GM12878 (cell line): ENCODE measurements at regions of chr6 and their contacts with region 1.

Region 1: DNA sequence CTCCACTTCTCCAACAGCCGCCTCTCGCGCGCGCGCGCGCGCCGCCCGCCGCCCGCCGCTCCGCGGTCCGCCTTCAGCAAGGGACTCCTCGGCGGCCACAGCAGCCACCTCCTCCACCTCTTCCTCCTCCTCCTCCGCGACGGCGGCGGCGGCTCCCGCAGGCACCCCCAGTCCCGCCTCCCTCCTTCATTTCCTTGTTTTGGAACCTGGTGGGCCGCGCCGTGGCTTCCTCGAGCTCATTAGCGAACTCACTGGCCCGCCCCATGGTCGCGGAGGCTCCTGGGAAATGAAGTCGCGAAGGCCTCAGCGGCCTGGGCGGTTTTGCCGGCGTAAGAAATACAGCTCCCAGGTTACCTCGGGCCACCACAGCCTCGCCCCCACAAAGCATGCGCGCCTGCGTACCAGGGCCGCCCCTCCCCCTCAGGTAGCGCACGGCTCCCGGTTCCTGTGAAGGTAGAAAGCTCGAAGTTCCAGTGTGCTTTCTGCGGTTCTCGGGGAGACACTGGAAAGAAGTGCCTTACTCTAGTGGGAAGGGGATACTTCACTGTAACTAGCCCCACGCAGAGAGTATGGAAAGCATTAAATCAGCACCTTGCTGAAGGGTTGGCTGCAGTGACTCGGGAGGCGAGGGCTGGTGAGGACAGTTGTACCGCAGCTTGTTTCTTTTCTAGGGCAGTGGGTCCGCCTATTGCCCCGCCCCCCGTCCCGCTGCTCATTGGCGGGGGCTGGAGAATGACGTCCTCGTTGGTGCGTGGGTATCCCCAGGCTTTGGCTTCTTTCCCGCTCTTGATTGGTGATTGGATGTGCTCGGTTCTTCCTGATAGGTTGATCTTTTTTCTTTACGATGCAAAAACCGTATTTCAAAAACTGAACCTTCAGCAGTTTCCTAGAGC is at the start of gene CDK19:
- DNase-seq: peak; percentile 96
- ATAC-seq: peak; percentile 89
- H3K4me3 ChIP-seq: peak within 1 kb of the TSS; percentile 77
- H3K27ac ChIP-seq: peak within 1 kb of the TSS; percentile 86
- H3K4me1 ChIP-seq: peaks cover 16% of the 10 kb centered on the region
- H3K27me3 ChIP-seq: no peaks in the 10 kb centered on the region
- CTCF ChIP-seq: no peak
- EP300 ChIP-seq: peak in 1 of 2 experiments; percentile 47; a peak in 2 of 4 replicates
- POLR2A ChIP-seq: peak; percentile 94
- RAD21 ChIP-seq: no peak
- polyA plus RNA-seq, gene CDK19: 4.6 to 10.1 TPM

Region 2: GRCh38 chr6:110784610-110784979 is 30.9 kb before region 1 on chr6:
- CTCF ChIA-PET with region 1: interaction called, 4 read pairs
- POLR2A ChIA-PET with region 1: interaction called, 7 read pairs
- RAD21 ChIA-PET with region 1: interaction called, 11 read pairs
- SMC1A ChIA-PET with region 1: interaction called, 6 read pairs
- in situ Hi-C with region 1: no loop called
- intact Hi-C with region 1: loop called (anchors 1 kb)
- DNase-seq: no peak
- ATAC-seq: peak; percentile 59
- H3K4me3 ChIP-seq: no peak overlapping the region
- H3K27ac ChIP-seq: no peak overlapping the region
- H3K4me1 ChIP-seq: peaks cover 36% of the 10 kb centered on the region
- H3K27me3 ChIP-seq: no peaks in the 10 kb centered on the region
- CTCF ChIP-seq: no peak
- EP300 ChIP-seq: no peak
- POLR2A ChIP-seq: no peak
- RAD21 ChIP-seq: no peak

Region 3: DNA sequence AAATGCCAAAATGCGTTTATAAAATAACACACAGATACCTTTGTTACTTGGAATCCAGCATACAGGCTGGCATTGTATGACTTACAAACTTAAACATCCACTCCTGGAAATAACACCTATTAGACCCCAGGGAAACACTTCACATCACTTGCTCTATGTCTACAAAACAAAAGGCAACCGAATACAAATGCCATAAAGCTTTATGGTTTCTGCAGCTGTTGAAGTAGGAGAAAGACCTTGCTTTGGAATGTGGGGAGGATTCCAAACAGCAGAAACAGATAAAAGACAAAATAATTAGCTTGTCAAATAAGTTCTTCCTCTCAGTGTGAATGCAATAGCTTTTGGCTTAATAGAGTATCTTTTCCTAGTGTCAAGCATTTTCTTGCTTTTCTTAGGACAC is 49.4 kb after region 1 on chr6:
- CTCF ChIA-PET with region 1: no interaction called
- POLR2A ChIA-PET with region 1: interaction called, 6 read pairs
- RAD21 ChIA-PET with region 1: interaction called, 13 read pairs
- SMC1A ChIA-PET with region 1: interaction called, 10 read pairs
- in situ Hi-C with region 1: no loop called
- intact Hi-C with region 1: no loop called
- DNase-seq: no peak
- ATAC-seq: no peak
- H3K4me3 ChIP-seq: no peak overlapping the region
- H3K27ac ChIP-seq: no peak overlapping the region
- H3K4me1 ChIP-seq: peaks cover 16% of the 10 kb centered on the region
- H3K27me3 ChIP-seq: no peaks in the 10 kb centered on the region
- CTCF ChIP-seq: no peak
- EP300 ChIP-seq: no peak
- POLR2A ChIP-seq: no peak
- RAD21 ChIP-seq: no peak

Region 4: DNA sequence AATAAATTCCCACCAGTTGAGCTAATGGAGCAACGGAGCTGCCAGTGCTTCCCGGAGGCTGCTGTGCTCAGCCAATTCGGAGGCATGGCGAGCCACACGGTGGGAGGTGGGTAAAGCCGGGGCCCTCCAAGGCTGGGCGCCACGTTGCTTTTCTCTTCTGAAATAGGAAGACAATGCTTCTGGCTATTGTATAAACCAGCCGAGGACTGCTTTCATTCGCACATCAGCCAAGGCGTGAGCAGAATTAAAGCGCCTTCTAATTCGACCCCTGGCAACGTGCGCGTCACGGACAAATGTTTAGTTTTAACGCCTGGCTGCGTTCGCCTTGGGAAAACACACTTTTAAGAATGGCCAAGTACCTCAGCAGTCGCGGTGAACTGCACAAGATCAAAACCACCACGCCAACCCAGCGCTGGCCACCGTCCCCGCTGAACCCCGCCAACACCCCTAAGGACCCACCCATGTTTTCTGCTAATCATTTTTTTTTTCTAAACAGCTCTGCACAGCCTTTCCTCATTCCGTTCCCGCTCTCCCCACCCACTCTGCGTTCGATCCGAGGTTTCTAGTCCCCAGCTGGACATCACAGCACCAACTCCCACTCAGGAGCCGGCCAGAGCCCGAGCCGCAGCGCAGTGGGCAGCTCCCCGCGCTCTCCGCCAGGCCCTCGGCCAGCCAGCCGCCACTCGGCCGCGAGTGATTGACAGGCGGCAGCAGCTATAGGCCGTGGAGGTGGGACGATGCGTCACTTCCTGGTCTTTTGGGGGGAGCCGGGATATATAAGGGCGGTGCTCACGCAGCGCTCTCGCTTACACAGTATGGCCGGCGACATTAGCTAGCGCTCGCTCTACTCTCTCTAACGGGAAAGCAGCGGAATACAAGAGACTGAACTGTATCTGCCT is 58.8 kb after region 1 on chr6 and contains the start of gene AMD1:
- CTCF ChIA-PET with region 1: interaction called, 50 read pairs
- POLR2A ChIA-PET with region 1: interaction called, 75 read pairs
- RAD21 ChIA-PET with region 1: interaction called, 107 read pairs
- SMC1A ChIA-PET with region 1: interaction called, 84 read pairs
- in situ Hi-C with region 1: no loop called
- intact Hi-C with region 1: loop called (anchors 1 kb)
- DNase-seq: peak; percentile 85
- ATAC-seq: peak; percentile 73
- H3K4me3 ChIP-seq: peak within 1 kb of the TSS; percentile 94
- H3K27ac ChIP-seq: peak within 1 kb of the TSS; percentile 93
- H3K4me1 ChIP-seq: peaks cover 16% of the 10 kb centered on the region
- H3K27me3 ChIP-seq: no peaks in the 10 kb centered on the region
- CTCF ChIP-seq: no peak
- EP300 ChIP-seq: no peak
- POLR2A ChIP-seq: peak; percentile 98
- RAD21 ChIP-seq: no peak
- polyA plus RNA-seq, gene AMD1: 59.6 to 75.5 TPM

Region 5: GRCh38 chr6:110882271-110882613 is 66.8 kb after region 1 on chr6:
- CTCF ChIA-PET with region 1: interaction called, 50 read pairs
- POLR2A ChIA-PET with region 1: interaction called, 75 read pairs
- RAD21 ChIA-PET with region 1: interaction called, 107 read pairs
- SMC1A ChIA-PET with region 1: interaction called, 84 read pairs
- in situ Hi-C with region 1: no loop called
- intact Hi-C with region 1: no loop called
- DNase-seq: no peak
- ATAC-seq: no peak
- H3K4me3 ChIP-seq: peak overlapping the region; percentile 40
- H3K27ac ChIP-seq: 0 out of 2 replicates have a peak overlapping the region, but pooled peaks have one; percentile 38
- H3K4me1 ChIP-seq: peaks cover 71% of the 10 kb centered on the region
- H3K27me3 ChIP-seq: no peaks in the 10 kb centered on the region
- CTCF ChIP-seq: no peak
- EP300 ChIP-seq: no peak
- POLR2A ChIP-seq: no peak
- RAD21 ChIP-seq: no peak

Region 6: DNA sequence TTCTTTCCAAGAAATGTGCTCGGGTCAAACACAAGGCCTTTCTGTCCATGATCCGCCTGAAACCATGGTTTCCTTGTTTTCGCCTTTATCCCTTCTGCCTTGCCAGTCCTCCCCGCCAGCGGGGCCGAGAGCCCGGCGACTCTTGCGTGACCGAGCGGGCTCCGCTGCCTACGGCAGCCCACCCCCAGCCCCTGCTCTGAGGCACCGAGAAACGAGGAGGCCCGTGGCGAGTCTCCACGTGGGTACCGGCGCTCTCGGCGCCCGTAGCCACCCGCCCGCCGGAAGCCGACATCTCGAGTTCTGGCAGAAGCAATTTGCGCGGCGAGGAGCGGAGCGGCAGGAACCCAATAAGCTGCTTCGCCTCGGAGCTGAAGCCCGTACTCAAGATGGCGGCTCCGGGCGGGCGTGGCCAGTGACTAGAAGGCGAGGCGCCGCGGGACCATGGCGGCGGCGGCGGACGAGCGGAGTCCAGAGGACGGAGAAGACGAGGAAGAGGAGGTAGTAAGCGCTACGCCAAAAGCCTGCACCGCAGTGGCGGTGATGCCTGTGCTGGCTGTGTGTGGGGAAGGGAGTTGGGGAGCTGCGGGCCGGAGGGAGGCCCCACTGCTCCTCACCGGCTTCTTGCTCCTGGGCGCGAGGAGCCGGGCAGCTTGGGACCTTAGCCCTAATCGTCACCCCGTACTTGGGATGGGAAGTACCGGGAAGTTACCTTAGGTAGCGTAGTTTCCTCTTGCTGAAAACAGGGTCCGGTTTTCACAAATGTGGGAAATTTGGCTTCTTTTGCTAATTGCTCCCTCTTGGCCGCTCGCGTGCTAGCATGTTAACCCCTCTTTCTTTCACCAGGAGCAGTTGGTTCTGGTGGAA is 143.1 kb after region 1 on chr6 and contains the start of gene GTF3C6:
- CTCF ChIA-PET with region 1: no interaction called
- POLR2A ChIA-PET with region 1: interaction called, 10 read pairs
- RAD21 ChIA-PET with region 1: interaction called, 9 read pairs
- SMC1A ChIA-PET with region 1: interaction called, 4 read pairs
- in situ Hi-C with region 1: no loop called
- intact Hi-C with region 1: loop called (anchors 5 kb)
- DNase-seq: peak; percentile 61
- ATAC-seq: peak; percentile 99
- H3K4me3 ChIP-seq: peak within 1 kb of the TSS; percentile 98
- H3K27ac ChIP-seq: peak within 1 kb of the TSS; percentile 96
- H3K4me1 ChIP-seq: peaks cover 7% of the 10 kb centered on the region
- H3K27me3 ChIP-seq: no peaks in the 10 kb centered on the region
- CTCF ChIP-seq: no peak
- EP300 ChIP-seq: no peak
- POLR2A ChIP-seq: peak; percentile 100
- RAD21 ChIP-seq: no peak
- polyA plus RNA-seq, gene GTF3C6: 122 to 154 TPM

Region 7: GRCh38 chr6:110981202-110981600 is 165.7 kb after region 1 on chr6:
- CTCF ChIA-PET with region 1: no interaction called
- POLR2A ChIA-PET with region 1: interaction called, 5 read pairs
- RAD21 ChIA-PET with region 1: interaction called, 7 read pairs
- SMC1A ChIA-PET with region 1: interaction called, 3 read pairs
- in situ Hi-C with region 1: no loop called
- intact Hi-C with region 1: loop called (anchors 10 kb)
- DNase-seq: no peak
- ATAC-seq: peak; percentile 16; the same call in 2 of the 3 replicates
- H3K4me3 ChIP-seq: peak overlapping the region; percentile 84
- H3K27ac ChIP-seq: peak overlapping the region; percentile 82
- H3K4me1 ChIP-seq: no peaks in the 10 kb centered on the region
- H3K27me3 ChIP-seq: no peaks in the 10 kb centered on the region
- CTCF ChIP-seq: no peak
- EP300 ChIP-seq: no peak
- POLR2A ChIP-seq: no peak
- RAD21 ChIP-seq: no peak